ENCODE measurements at regions of chr3 and their contacts with region 1.

Region 1: DNA sequence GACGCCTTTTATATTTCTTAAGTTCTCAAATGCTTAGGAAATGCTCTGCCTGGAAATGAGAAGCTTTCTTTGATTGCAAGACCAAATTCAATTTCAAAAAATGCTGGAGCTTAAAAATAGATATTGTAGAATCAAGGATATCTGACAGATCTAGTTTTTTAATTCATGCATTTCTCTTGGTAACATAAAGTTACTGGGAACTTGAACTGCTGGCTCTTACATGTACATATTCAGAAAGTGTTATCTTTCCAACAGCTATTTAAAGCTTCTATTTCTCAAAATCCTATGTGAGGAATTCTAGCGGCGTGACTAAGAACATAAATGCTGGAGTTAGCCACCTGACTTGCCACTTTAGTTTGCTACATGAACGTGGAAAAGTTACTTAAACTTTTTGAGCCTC is 109.3 kb downstream of the C3orf38 start:
- DNase-seq: no peak
- H3K4me3 ChIP-seq: no peak overlapping the region
- H3K27ac ChIP-seq: no peak overlapping the region
- H3K4me1 ChIP-seq: no peaks in the 10 kb centered on the region
- H3K27me3 ChIP-seq: no peaks in the 10 kb centered on the region
- CTCF ChIP-seq: no peak
- POLR2A ChIP-seq: no peak

Region 2: GRCh38 chr3:87370007-87370406 is 889.0 kb before region 1 on chr3:
- intact Hi-C with region 1: loop called (anchors 10 kb)
- DNase-seq: no peak
- H3K4me3 ChIP-seq: no peak overlapping the region
- H3K27ac ChIP-seq: no peak overlapping the region
- H3K4me1 ChIP-seq: no peaks in the 10 kb centered on the region
- H3K27me3 ChIP-seq: no peaks in the 10 kb centered on the region
- CTCF ChIP-seq: no peak
- POLR2A ChIP-seq: no peak

Measured in breast epithelium (tissue), 4 donors.